ENCODE measurements at regions of chr7 and their contacts with region 1.

Region 1: DNA sequence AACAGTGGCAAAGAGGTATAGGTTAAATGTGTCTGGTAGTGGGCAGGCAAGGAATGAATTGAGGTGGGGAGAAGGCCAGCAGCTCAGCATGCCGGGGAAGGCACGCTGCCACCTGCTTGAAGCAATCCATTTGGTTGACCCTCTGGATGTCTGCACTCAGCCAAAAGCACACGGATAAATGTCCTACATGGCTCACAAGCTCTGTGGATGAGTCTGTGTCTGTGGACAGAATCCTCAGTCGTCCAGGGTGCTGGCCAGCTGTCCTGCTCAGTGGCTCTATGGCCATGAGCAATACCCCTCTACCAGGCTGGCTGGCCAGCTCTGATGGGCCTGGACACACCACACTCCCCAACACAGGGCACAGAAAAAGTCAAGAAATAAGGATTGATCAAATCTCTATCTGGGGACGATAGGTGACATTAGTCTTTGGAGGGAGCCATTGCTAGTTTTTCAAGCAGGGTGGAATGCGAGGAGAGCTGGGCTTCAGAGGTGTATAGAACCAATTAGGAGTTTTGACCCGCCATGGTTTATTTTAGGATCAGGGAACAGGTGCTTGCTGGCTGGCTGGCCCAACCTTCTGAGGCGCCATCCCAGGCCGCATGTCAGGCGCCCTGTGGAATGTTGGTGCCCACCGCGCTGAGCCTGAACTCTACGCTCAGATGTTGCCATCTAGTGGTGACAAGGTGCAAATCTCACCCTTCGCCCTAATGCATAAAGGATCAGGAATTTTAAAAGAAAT is 493.4 kb downstream of the TNS3 start:
- DNase-seq: peak; percentile 74
- ATAC-seq: peak; percentile 78
- H3K4me3 ChIP-seq: no peak overlapping the region
- H3K27ac ChIP-seq: peak overlapping the region; percentile 23; the same call in 1 of the 2 replicates
- H3K4me1 ChIP-seq: peaks cover 14% of the 10 kb centered on the region
- H3K27me3 ChIP-seq: no peaks in the 10 kb centered on the region
- CTCF ChIP-seq: peak; percentile 87

Region 2: GRCh38 chr7:46352004-46352954 is 736.2 kb before region 1 on chr7:
- CTCF ChIA-PET with region 1: no interaction called
- POLR2A ChIA-PET with region 1: no interaction called
- intact Hi-C with region 1: loop called (anchors 2 kb)
- DNase-seq: peak; percentile 79
- ATAC-seq: peak; percentile 85
- H3K4me3 ChIP-seq: no peak overlapping the region
- H3K27ac ChIP-seq: no peak overlapping the region
- H3K4me1 ChIP-seq: no peaks in the 10 kb centered on the region
- H3K27me3 ChIP-seq: no peaks in the 10 kb centered on the region
- CTCF ChIP-seq: peak; percentile 91

Region 3: DNA sequence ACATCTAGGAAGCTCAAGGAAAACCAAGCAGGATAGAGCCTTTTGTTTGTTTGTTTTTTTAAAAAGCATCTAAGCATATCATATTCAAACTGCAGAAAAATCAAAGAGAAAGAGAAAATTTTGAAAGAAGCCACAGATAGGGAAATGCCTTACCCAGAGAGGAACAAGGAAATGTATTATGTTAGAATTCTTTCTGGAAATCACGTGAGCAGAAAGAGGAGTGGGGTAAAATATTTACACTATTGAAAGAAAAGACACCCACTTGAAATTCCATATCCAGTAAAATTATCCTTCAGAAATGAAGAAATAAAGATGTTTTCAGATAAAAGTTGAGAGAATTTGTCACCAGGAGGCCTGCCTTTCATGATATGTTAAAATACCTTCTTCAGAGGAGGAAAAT is 391.8 kb before region 1 on chr7:
- CTCF ChIA-PET with region 1: no interaction called
- POLR2A ChIA-PET with region 1: no interaction called
- intact Hi-C with region 1: loop called (anchors 2 kb)
- DNase-seq: no peak
- ATAC-seq: no peak
- H3K4me3 ChIP-seq: no peak overlapping the region
- H3K27ac ChIP-seq: no peak overlapping the region
- H3K4me1 ChIP-seq: no peaks in the 10 kb centered on the region; the same call in 1 of the 2 replicates
- H3K27me3 ChIP-seq: no peaks in the 10 kb centered on the region
- CTCF ChIP-seq: no peak

Region 4: GRCh38 chr7:46776790-46777189 is 311.7 kb before region 1 on chr7:
- CTCF ChIA-PET with region 1: no interaction called
- POLR2A ChIA-PET with region 1: no interaction called
- intact Hi-C with region 1: loop called (anchors 1 kb)
- DNase-seq: peak; percentile 47
- ATAC-seq: peak; percentile 38; the same call in 1 of the 2 replicates
- H3K4me3 ChIP-seq: no peak overlapping the region
- H3K27ac ChIP-seq: no peak overlapping the region
- H3K4me1 ChIP-seq: no peaks in the 10 kb centered on the region
- H3K27me3 ChIP-seq: no peaks in the 10 kb centered on the region
- CTCF ChIP-seq: peak; percentile 68

Region 5: DNA sequence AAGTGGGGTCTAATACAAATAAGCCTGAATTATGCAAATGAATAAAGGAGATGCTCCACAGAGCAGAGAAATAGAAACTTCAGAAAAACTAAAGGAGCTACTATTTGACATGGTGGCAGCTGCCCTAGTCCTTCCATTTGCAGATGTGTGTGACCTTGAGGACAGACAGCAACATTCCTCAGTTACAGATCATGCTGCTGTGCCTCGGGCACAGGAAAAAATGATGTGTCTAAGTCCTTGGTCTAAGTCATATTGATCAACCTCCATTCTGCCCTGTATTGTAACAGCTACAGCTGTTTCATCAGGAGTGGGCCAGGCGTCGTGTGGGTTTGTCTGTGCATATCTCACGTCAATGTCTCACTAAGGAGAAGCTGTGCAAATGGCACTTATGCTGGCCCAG is 217.0 kb before region 1 on chr7:
- CTCF ChIA-PET with region 1: no interaction called
- POLR2A ChIA-PET with region 1: no interaction called
- intact Hi-C with region 1: loop called (anchors 10 kb)
- DNase-seq: no peak
- ATAC-seq: no peak
- H3K4me3 ChIP-seq: no peak overlapping the region
- H3K27ac ChIP-seq: no peak overlapping the region
- H3K4me1 ChIP-seq: no peaks in the 10 kb centered on the region
- H3K27me3 ChIP-seq: no peaks in the 10 kb centered on the region
- CTCF ChIP-seq: no peak

Region 6: GRCh38 chr7:46932676-46933424 is 155.6 kb before region 1 on chr7:
- CTCF ChIA-PET with region 1: no interaction called
- POLR2A ChIA-PET with region 1: no interaction called
- intact Hi-C with region 1: loop called (anchors 5 kb)
- DNase-seq: peak; percentile 52
- ATAC-seq: no peak
- H3K4me3 ChIP-seq: no peak overlapping the region
- H3K27ac ChIP-seq: no peak overlapping the region
- H3K4me1 ChIP-seq: peaks cover 18% of the 10 kb centered on the region
- H3K27me3 ChIP-seq: no peaks in the 10 kb centered on the region
- CTCF ChIP-seq: peak; percentile 34; the same call in 1 of the 2 replicates

Region 7: GRCh38 chr7:47143339-47143738 is 54.8 kb after region 1 on chr7:
- CTCF ChIA-PET with region 1: no interaction called
- POLR2A ChIA-PET with region 1: no interaction called
- intact Hi-C with region 1: no loop called
- DNase-seq: peak; percentile 9
- ATAC-seq: no peak
- H3K4me3 ChIP-seq: no peak overlapping the region
- H3K27ac ChIP-seq: no peak overlapping the region
- H3K4me1 ChIP-seq: no peaks in the 10 kb centered on the region
- H3K27me3 ChIP-seq: peaks cover 50% of the 10 kb centered on the region
- CTCF ChIP-seq: no peak

Region 8: DNA sequence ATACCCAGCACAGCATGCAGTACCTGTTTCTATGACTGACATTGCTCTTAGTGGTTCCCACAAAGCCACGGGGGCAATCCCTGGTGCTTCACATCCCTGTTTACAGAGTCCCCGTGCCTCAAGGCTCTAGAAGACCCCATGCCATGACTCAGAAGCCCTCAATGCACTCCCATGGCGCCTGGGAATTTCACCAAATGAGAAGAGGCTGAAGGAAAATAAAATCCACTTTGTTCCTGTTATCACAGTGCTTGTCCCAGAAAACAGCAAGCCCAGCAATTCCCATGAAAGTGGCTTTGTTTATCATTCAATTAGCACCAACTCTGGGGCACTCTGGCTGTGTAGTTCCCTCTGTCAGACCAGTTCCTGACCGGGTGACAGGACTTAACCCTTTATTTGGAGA is 225.1 kb after region 1 on chr7:
- CTCF ChIA-PET with region 1: no interaction called
- POLR2A ChIA-PET with region 1: no interaction called
- intact Hi-C with region 1: no loop called
- DNase-seq: no peak
- ATAC-seq: no peak
- H3K4me3 ChIP-seq: no peak overlapping the region
- H3K27ac ChIP-seq: no peak overlapping the region
- H3K4me1 ChIP-seq: no peaks in the 10 kb centered on the region
- H3K27me3 ChIP-seq: no peaks in the 10 kb centered on the region
- CTCF ChIP-seq: no peak

Region 9: GRCh38 chr7:47520406-47520805 is 431.9 kb after region 1 on chr7:
- CTCF ChIA-PET with region 1: no interaction called
- POLR2A ChIA-PET with region 1: no interaction called
- intact Hi-C with region 1: no loop called
- DNase-seq: no peak
- ATAC-seq: no peak
- H3K4me3 ChIP-seq: no peak overlapping the region
- H3K27ac ChIP-seq: no peak overlapping the region
- H3K4me1 ChIP-seq: peaks cover 9% of the 10 kb centered on the region; the same call in 1 of the 2 replicates
- H3K27me3 ChIP-seq: no peaks in the 10 kb centered on the region
- CTCF ChIP-seq: no peak

Measured in PC-3 (cell line).